ENCODE measurements at regions of chr4 and their contacts with region 1.

Region 1: GRCh38 chr4:151530783-151531182 is 121.8 kb downstream of the FHIP1A start:
- DNase-seq: peak; percentile 12

Region 2: DNA sequence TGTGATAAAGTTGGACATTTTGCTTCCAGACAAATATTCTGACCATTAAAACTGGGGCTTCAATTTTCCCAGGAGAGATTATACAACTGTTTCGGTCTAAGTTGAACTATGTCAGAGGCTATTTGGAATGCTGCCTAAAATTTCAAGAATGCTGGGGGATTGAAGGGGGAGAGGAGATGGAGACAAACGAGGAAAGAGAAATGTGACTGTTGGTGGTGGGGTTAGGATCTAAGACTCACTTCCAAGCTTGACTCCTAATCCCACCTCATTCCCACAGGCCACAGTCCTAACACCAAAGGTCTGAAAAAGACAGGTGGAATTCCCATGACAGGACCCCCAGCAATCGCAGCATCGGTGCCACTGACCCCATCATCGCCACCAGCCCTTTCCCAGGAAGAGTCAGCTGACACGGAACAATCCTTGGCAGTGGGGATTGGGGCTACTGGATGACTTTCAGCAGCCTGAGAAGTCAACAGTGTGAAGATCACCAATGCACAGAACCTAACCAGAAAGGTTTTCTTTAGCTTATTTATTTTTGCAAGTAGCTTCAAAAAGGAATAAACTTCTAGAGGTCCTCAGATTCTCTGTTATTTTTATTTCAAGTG is 327.8 kb before region 1 on chr4:
- CTCF ChIA-PET with region 1: no interaction called
- POLR2A ChIA-PET with region 1: no interaction called
- DNase-seq: no peak

Region 3: DNA sequence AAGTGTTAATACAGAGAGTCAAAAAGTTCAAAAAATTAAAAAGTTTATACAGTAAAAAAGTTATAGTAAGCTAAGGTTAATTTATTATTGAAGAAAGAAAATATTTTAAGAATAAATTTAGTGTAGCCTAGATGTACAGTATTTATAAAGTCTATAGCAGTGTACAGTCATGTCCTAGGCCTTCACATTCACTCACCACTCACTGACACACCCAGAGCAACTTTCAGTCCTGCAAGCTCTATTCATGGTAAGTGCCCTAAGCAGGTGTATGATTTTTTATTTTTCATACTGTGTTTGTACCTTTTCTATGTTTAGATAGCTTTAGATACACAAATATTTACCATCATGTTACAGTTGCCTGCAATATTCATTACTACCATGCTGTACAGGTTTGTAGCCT is 12.9 kb before region 1 on chr4:
- CTCF ChIA-PET with region 1: no interaction called
- POLR2A ChIA-PET with region 1: no interaction called
- DNase-seq: no peak

Region 4: DNA sequence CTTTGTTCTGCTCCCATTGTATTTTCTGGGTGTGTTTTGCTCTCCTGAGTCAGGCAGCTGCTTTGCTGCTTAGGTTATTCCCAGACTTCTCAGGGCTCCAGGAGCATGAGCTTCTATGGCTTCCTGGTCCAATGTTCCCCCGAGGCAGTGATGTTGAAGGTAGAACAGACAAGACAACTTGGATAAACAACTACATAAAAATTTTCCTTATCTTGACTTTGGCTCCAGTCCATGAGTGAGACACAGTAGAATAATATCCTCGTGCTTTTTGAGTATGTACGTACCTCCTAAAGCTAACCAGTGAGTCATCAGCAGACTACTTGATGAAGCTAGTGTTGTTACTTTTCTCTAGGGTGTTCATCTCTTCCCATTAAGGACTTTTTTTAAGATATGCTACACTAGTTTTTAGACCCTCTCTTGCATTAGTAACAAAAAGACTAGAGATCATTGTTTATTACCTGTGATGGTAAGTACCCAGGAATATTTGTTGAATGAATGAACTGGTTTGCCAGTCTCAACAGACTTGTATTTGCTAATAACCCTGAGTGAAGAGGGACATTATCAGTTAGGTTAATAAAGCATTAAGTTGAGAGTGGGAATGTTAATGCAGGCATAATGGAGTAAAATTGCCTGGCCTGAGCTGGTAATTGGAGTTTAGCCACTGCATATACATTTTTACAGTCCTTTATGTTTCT is 10.1 kb after region 1 on chr4:
- CTCF ChIA-PET with region 1: interaction called, 12 read pairs
- POLR2A ChIA-PET with region 1: interaction called, 3 read pairs
- DNase-seq: peak; percentile 13

Measured in HEK293T (cell line).